H1 (cell line): ENCODE measurements at regions of chr12 and their contacts with region 1.

Region 1: GRCh38 chr12:132523576-132524331 is 33.8 kb downstream of the FBRSL1 start:
- DNase-seq: peak in 1 of 2 experiments; percentile 94
- H3K4me3 ChIP-seq: no peak overlapping the region
- H3K27ac ChIP-seq: no peak overlapping the region
- H3K4me1 ChIP-seq: peaks cover 0 to 15% (median 11%) of the 10 kb centered on the region in 4 experiments; a peak in 6 of 7 replicates
- H3K27me3 ChIP-seq: peaks cover 0 to 24% (median 18%) of the 10 kb centered on the region in 4 experiments; a peak in 6 of 7 replicates
- CTCF ChIP-seq: peak in 2 of 3 experiments; percentile 78 to 89; a peak in 3 of 4 replicates
- EP300 ChIP-seq: no peak
- POLR2A ChIP-seq: no peak
- RAD21 ChIP-seq: peak; percentile 67 to 76

Region 2: GRCh38 chr12:132356691-132357622 is 166.8 kb before region 1 on chr12:
- CTCF ChIA-PET with region 1: no interaction called
- POLR2A ChIA-PET with region 1: no interaction called
- DNase-seq: peak in 1 of 2 experiments; percentile 17
- H3K4me3 ChIP-seq: no peak overlapping the region
- H3K27ac ChIP-seq: no peak overlapping the region
- H3K4me1 ChIP-seq: peaks cover 0 to 13% (median 7%) of the 10 kb centered on the region in 4 experiments; a peak in 4 of 7 replicates
- H3K27me3 ChIP-seq: peaks cover 0 to 27% (median 13%) of the 10 kb centered on the region in 4 experiments; a peak in 4 of 7 replicates
- CTCF ChIP-seq: no peak
- EP300 ChIP-seq: no peak
- POLR2A ChIP-seq: no peak
- RAD21 ChIP-seq: no peak

Region 3: GRCh38 chr12:132460571-132460970 is 63.2 kb before region 1 on chr12:
- CTCF ChIA-PET with region 1: interaction called, 21 read pairs
- POLR2A ChIA-PET with region 1: no interaction called
- DNase-seq: peak in 1 of 2 experiments; percentile 75
- H3K4me3 ChIP-seq: no peak overlapping the region
- H3K27ac ChIP-seq: no peak overlapping the region
- H3K4me1 ChIP-seq: no peaks in the 10 kb centered on the region
- H3K27me3 ChIP-seq: peaks cover 31 to 60% (median 54%) of the 10 kb centered on the region in 4 experiments
- CTCF ChIP-seq: peak in 2 of 3 experiments; percentile 66 to 79; a peak in 3 of 4 replicates
- EP300 ChIP-seq: no peak
- POLR2A ChIP-seq: no peak
- RAD21 ChIP-seq: peak; percentile 66 to 71

Region 4: DNA sequence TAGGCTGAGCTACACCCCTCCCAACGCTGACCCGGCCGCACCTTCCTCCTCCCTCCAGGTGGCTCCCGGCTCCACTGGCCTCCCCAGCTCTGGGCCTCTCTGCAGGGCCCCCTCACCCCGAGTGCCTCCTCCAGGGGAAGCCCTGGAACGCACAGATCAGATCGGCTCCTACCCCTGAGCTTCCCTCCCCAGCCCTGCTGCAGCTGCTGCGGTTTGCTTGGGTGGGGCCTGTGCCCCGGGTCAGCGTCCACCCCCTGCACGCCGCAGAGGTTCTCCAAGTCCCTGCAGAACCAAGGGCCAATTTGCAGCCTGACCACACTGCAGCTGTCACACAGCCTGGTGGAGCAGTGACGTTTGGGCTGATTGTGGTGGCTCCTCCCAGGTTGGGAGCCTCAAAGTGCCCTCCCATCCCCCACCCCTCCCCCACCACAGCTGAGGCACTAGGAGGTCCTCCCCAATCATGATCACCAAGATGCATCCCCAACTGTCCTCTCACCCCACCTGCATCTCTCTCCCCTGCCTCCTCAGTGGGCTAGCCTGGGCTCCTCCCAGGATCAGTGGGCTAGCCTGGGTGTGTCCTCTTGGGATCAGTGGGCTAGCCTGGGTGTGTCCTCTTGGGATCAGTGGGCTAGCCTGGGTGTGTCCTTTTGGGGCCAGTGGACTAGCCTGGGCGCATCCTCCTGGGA is 46.6 kb before region 1 on chr12:
- CTCF ChIA-PET with region 1: interaction called, 10 read pairs
- POLR2A ChIA-PET with region 1: no interaction called
- DNase-seq: no peak
- H3K4me3 ChIP-seq: no peak overlapping the region
- H3K27ac ChIP-seq: no peak overlapping the region
- H3K4me1 ChIP-seq: no peaks in the 10 kb centered on the region
- H3K27me3 ChIP-seq: peaks cover 15 to 70% (median 46%) of the 10 kb centered on the region in 4 experiments
- CTCF ChIP-seq: no peak
- EP300 ChIP-seq: no peak
- POLR2A ChIP-seq: no peak
- RAD21 ChIP-seq: no peak

Region 5: GRCh38 chr12:132500142-132500855 is 23.5 kb before region 1 on chr12:
- CTCF ChIA-PET with region 1: interaction called, 26 read pairs
- POLR2A ChIA-PET with region 1: no interaction called
- DNase-seq: no peak
- H3K4me3 ChIP-seq: no peak overlapping the region
- H3K27ac ChIP-seq: no peak overlapping the region
- H3K4me1 ChIP-seq: peaks cover 0 to 18% (median 10%) of the 10 kb centered on the region in 4 experiments; a peak in 5 of 7 replicates
- H3K27me3 ChIP-seq: no peaks in the 10 kb centered on the region; a peak in 2 of 7 replicates
- CTCF ChIP-seq: no peak
- EP300 ChIP-seq: no peak
- POLR2A ChIP-seq: no peak
- RAD21 ChIP-seq: no peak

Region 6: GRCh38 chr12:132506328-132507160 is 17.2 kb before region 1 on chr12:
- CTCF ChIA-PET with region 1: interaction called, 26 read pairs
- POLR2A ChIA-PET with region 1: no interaction called
- DNase-seq: no peak
- H3K4me3 ChIP-seq: no peak overlapping the region
- H3K27ac ChIP-seq: no peak overlapping the region
- H3K4me1 ChIP-seq: peaks cover 0 to 36% (median 12%) of the 10 kb centered on the region in 4 experiments; a peak in 6 of 7 replicates
- H3K27me3 ChIP-seq: no peaks in the 10 kb centered on the region; a peak in 1 of 7 replicates
- CTCF ChIP-seq: no peak
- EP300 ChIP-seq: no peak
- POLR2A ChIP-seq: no peak
- RAD21 ChIP-seq: no peak

Region 7: DNA sequence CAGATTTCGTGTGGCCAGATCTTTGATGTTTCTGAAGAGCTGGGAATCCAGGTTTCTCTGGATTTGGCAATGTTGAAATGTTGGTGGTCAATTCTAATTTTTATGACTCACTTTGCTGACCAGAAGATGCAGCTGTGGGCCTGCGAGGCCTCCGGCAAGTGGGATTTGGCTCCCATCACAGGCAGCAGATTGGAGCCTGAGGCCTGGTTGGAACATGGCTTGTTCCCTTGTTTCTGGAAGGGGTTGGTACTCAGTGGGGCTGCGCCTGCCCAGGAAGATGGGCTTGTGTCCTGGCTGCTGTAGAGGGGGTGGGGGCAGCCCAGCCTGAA is 10.7 kb before region 1 on chr12:
- CTCF ChIA-PET with region 1: interaction called, 26 read pairs
- POLR2A ChIA-PET with region 1: interaction called, 4 read pairs
- DNase-seq: no peak
- H3K4me3 ChIP-seq: no peak overlapping the region
- H3K27ac ChIP-seq: no peak overlapping the region
- H3K4me1 ChIP-seq: no peaks in the 10 kb centered on the region; a peak in 1 of 7 replicates
- H3K27me3 ChIP-seq: peaks cover 0 to 13% (median 11%) of the 10 kb centered on the region in 4 experiments; a peak in 4 of 7 replicates
- CTCF ChIP-seq: no peak
- EP300 ChIP-seq: no peak
- POLR2A ChIP-seq: no peak
- RAD21 ChIP-seq: no peak

Region 8: GRCh38 chr12:132566516-132567131 is 42.9 kb after region 1 on chr12:
- CTCF ChIA-PET with region 1: interaction called, 15 read pairs
- POLR2A ChIA-PET with region 1: interaction called, 3 read pairs
- DNase-seq: no peak
- H3K4me3 ChIP-seq: no peak overlapping the region
- H3K27ac ChIP-seq: no peak overlapping the region
- H3K4me1 ChIP-seq: peaks cover 0 to 6% (median 4%) of the 10 kb centered on the region in 4 experiments; a peak in 5 of 7 replicates
- H3K27me3 ChIP-seq: peaks cover 0 to 5% (median 1%) of the 10 kb centered on the region in 4 experiments; a peak in 3 of 7 replicates
- CTCF ChIP-seq: no peak
- EP300 ChIP-seq: no peak
- POLR2A ChIP-seq: no peak
- RAD21 ChIP-seq: no peak